ENCODE measurements at regions of chr9 and their contacts with region 1.

Region 1: GRCh38 chr9:122234022-122234748 is 5.4 kb upstream of the LHX6 start:
- DNase-seq: no peak
- ATAC-seq: no peak
- H3K4me3 ChIP-seq: no peak overlapping the region
- H3K27ac ChIP-seq: no peak overlapping the region
- H3K4me1 ChIP-seq: no peaks in the 10 kb centered on the region
- H3K27me3 ChIP-seq: peaks cover 44% of the 10 kb centered on the region
- CTCF ChIP-seq: no peak
- POLR2A ChIP-seq: no peak
- RAD21 ChIP-seq: no peak

Region 2: GRCh38 chr9:122134822-122135528 is 99.2 kb before region 1 on chr9:
- CTCF ChIA-PET with region 1: no interaction called
- POLR2A ChIA-PET with region 1: interaction called, 3 read pairs
- dilution Hi-C with region 1: no loop called
- in situ Hi-C with region 1: no loop called
- intact Hi-C with region 1: loop called (anchors 5 kb)
- DNase-seq: peak; percentile 23
- ATAC-seq: peak; percentile 51; the same call in 1 of the 2 replicates
- H3K4me3 ChIP-seq: no peak overlapping the region
- H3K27ac ChIP-seq: no peak overlapping the region
- H3K4me1 ChIP-seq: peaks cover 8% of the 10 kb centered on the region
- H3K27me3 ChIP-seq: peaks cover 4% of the 10 kb centered on the region; the same call in 1 of the 2 replicates
- CTCF ChIP-seq: no peak
- POLR2A ChIP-seq: no peak
- RAD21 ChIP-seq: no peak

Region 3: GRCh38 chr9:122546190-122546589 is 312.0 kb after region 1 on chr9:
- CTCF ChIA-PET with region 1: no interaction called
- POLR2A ChIA-PET with region 1: no interaction called
- dilution Hi-C with region 1: no loop called
- in situ Hi-C with region 1: no loop called
- intact Hi-C with region 1: no loop called
- DNase-seq: no peak
- ATAC-seq: no peak
- H3K4me3 ChIP-seq: no peak overlapping the region
- H3K27ac ChIP-seq: no peak overlapping the region
- H3K4me1 ChIP-seq: no peaks in the 10 kb centered on the region
- H3K27me3 ChIP-seq: no peaks in the 10 kb centered on the region
- CTCF ChIP-seq: no peak
- POLR2A ChIP-seq: no peak
- RAD21 ChIP-seq: no peak

Region 4: DNA sequence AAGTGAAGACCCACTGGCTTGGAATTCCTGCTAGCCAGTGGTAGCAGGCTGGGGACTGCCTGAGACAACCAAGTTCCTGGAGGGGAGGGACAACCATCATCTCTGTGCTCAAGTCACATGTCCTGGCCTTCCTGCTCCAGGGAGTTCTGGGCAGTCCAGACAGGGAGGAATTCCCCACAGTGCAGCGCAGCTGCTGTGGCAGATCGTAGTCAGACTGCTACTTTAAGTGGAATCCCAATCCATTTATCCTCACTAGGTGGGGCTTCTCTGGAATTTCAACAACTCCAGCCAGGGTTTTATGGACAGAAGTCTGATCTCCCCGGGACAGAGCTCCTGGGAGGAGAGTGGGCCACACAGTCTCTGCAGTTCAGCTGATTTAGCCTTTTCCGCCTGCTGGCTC is 533.6 kb after region 1 on chr9:
- CTCF ChIA-PET with region 1: no interaction called
- POLR2A ChIA-PET with region 1: no interaction called
- dilution Hi-C with region 1: no loop called
- in situ Hi-C with region 1: no loop called
- intact Hi-C with region 1: no loop called
- DNase-seq: no peak
- ATAC-seq: no peak
- H3K4me3 ChIP-seq: no peak overlapping the region
- H3K27ac ChIP-seq: no peak overlapping the region
- H3K4me1 ChIP-seq: no peaks in the 10 kb centered on the region
- H3K27me3 ChIP-seq: no peaks in the 10 kb centered on the region
- CTCF ChIP-seq: no peak
- POLR2A ChIP-seq: no peak
- RAD21 ChIP-seq: no peak

Measured in IMR-90 (cell line).